Activated B cell treated with CpG ODN at 0.5 μM for 24 hours (primary cell): ENCODE measurements at regions of chr6 and their contacts with region 1.

Region 1: GRCh38 chr6:2817778-2818443 is 23.8 kb downstream of the SERPINB1 start:
- DNase-seq: no peak
- ATAC-seq: no peak
- H3K4me3 Mint-ChIP-seq: no peak overlapping the region
- H3K27ac Mint-ChIP-seq: no peak overlapping the region
- H3K4me1 Mint-ChIP-seq: no peaks in the 10 kb centered on the region
- H3K27me3 Mint-ChIP-seq: no peaks in the 10 kb centered on the region
- CTCF ChIP-seq: no peak

Region 2: DNA sequence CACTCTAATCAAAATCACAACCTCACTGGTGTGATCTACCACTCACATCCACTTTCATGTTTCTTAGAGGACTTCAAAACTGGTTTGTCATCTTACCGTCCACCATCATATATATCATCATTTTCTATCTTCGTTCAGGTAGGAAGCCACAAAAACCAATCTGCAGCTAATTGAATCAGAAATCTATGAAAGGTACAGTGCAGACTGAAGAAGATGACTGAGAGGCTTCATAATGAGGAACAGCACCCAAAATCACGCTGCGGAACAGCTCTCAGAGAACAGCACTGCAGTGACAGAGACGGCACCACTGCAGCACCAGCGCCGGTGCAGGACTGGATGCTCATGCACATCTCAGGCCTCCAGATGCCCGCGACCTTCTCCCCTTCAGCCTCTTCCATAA is 585.5 kb before region 1 on chr6:
- CTCF ChIA-PET with region 1: no interaction called
- POLR2A ChIA-PET with region 1: no interaction called
- intact Hi-C with region 1: no loop called
- DNase-seq: no peak
- ATAC-seq: peak; percentile 74
- H3K4me3 Mint-ChIP-seq: no peak overlapping the region
- H3K27ac Mint-ChIP-seq: peak overlapping the region; percentile 18
- H3K4me1 Mint-ChIP-seq: peaks cover 35% of the 10 kb centered on the region
- H3K27me3 Mint-ChIP-seq: no peaks in the 10 kb centered on the region
- CTCF ChIP-seq: no peak

Region 3: GRCh38 chr6:2777250-2777649 is 40.7 kb before region 1 on chr6:
- CTCF ChIA-PET with region 1: no interaction called
- POLR2A ChIA-PET with region 1: no interaction called
- intact Hi-C with region 1: loop called (anchors 1 kb)
- DNase-seq: no peak
- ATAC-seq: no peak
- H3K4me3 Mint-ChIP-seq: no peak overlapping the region
- H3K27ac Mint-ChIP-seq: no peak overlapping the region
- H3K4me1 Mint-ChIP-seq: peaks cover 3% of the 10 kb centered on the region
- H3K27me3 Mint-ChIP-seq: no peaks in the 10 kb centered on the region
- CTCF ChIP-seq: no peak